MCF 10A (cell line): ENCODE measurements at regions of chr2 and their contacts with region 1.

Region 1: GRCh38 chr2:109128048-109128465 is 948 bp upstream of the SH3RF3 start:
- DNase-seq: peak; percentile 88
- H3K4me3 Mint-ChIP-seq: peak overlapping the region; percentile 92
- H3K27ac Mint-ChIP-seq: no peak overlapping the region
- H3K4me1 Mint-ChIP-seq: peaks cover 58% of the 10 kb centered on the region
- H3K27me3 Mint-ChIP-seq: no peaks in the 10 kb centered on the region
- CTCF ChIP-seq: peak; percentile 89

Region 2: DNA sequence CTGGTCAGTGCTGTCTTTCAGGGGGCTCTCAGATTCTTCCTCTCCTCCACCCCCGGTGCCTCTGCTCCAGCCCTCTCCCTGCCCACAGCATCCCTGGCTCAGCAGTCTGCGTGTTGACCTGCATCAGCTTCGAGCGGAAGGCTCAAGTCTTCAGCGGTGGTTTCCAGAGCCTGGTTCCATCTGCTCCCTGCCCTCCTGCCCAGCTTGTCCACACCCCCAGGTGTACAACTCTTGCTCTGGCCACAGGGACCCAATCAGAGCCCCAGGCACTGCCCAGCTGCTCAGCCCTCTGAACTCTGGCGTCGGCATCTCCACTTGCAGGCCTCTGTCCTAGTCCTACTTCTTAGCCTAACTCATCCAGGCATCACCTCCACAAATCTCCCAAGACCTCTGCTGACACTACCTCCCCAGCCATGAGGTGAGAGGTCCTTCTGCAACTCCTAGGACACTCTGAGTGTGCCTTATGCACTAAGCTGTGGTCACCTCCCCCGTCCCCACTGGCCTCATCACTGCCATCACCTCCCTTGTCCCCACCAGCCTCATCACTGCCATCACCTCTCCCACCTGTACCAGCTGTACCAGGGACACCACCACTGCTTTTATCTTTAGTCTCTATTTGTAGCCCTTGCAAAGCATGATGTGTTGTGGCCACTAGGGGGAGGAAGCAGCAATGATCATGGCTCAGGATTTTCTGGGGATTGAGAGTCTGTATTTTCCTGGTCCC is 200.0 kb before region 1 on chr2:
- CTCF ChIA-PET with region 1: interaction called, 3 read pairs
- POLR2A ChIA-PET with region 1: no interaction called
- intact Hi-C with region 1: loop called (anchors 5 kb)
- DNase-seq: peak; percentile 75
- H3K4me3 Mint-ChIP-seq: no peak overlapping the region
- H3K27ac Mint-ChIP-seq: no peak overlapping the region
- H3K4me1 Mint-ChIP-seq: peaks cover 7% of the 10 kb centered on the region
- H3K27me3 Mint-ChIP-seq: peaks cover 24% of the 10 kb centered on the region
- CTCF ChIP-seq: peak; percentile 72

Region 3: DNA sequence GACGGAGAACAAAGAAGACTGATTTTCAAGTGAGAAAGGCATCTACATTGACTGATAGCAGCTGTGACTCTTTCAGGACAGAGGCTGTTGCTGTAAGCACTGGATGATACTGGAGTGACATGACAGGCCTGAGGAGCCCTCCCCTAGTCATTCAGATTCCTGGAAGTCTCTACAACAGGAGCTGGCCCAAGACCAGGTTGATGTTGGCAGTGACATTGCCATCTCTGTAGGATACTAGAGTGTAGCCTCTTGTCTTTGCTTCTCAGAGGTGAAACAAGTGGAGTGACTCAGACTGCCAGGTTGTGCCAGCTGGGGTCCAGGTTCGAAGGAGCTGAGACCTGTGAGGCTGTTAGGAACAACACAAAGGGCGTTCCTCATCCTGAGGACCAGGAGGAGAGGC is 43.7 kb before region 1 on chr2:
- CTCF ChIA-PET with region 1: no interaction called
- POLR2A ChIA-PET with region 1: no interaction called
- intact Hi-C with region 1: no loop called
- DNase-seq: no peak
- H3K4me3 Mint-ChIP-seq: no peak overlapping the region
- H3K27ac Mint-ChIP-seq: no peak overlapping the region
- H3K4me1 Mint-ChIP-seq: no peaks in the 10 kb centered on the region
- H3K27me3 Mint-ChIP-seq: peaks cover 37% of the 10 kb centered on the region
- CTCF ChIP-seq: no peak

Region 4: GRCh38 chr2:109213646-109214417 is 85.8 kb after region 1 on chr2:
- CTCF ChIA-PET with region 1: interaction called, 4 read pairs
- POLR2A ChIA-PET with region 1: interaction called, 5 read pairs
- intact Hi-C with region 1: loop called (anchors 2 kb)
- DNase-seq: peak; percentile 97
- H3K4me3 Mint-ChIP-seq: peak overlapping the region; percentile 48
- H3K27ac Mint-ChIP-seq: peak overlapping the region; percentile 90
- H3K4me1 Mint-ChIP-seq: peaks cover 78% of the 10 kb centered on the region
- H3K27me3 Mint-ChIP-seq: no peaks in the 10 kb centered on the region
- CTCF ChIP-seq: no peak

Region 5: GRCh38 chr2:109260886-109261700 is 133.0 kb after region 1 on chr2:
- CTCF ChIA-PET with region 1: interaction called, 4 read pairs
- POLR2A ChIA-PET with region 1: no interaction called
- intact Hi-C with region 1: loop called (anchors 1 kb)
- DNase-seq: peak; percentile 47
- H3K4me3 Mint-ChIP-seq: no peak overlapping the region
- H3K27ac Mint-ChIP-seq: no peak overlapping the region
- H3K4me1 Mint-ChIP-seq: peaks cover 33% of the 10 kb centered on the region
- H3K27me3 Mint-ChIP-seq: no peaks in the 10 kb centered on the region
- CTCF ChIP-seq: peak; percentile 28

Region 6: DNA sequence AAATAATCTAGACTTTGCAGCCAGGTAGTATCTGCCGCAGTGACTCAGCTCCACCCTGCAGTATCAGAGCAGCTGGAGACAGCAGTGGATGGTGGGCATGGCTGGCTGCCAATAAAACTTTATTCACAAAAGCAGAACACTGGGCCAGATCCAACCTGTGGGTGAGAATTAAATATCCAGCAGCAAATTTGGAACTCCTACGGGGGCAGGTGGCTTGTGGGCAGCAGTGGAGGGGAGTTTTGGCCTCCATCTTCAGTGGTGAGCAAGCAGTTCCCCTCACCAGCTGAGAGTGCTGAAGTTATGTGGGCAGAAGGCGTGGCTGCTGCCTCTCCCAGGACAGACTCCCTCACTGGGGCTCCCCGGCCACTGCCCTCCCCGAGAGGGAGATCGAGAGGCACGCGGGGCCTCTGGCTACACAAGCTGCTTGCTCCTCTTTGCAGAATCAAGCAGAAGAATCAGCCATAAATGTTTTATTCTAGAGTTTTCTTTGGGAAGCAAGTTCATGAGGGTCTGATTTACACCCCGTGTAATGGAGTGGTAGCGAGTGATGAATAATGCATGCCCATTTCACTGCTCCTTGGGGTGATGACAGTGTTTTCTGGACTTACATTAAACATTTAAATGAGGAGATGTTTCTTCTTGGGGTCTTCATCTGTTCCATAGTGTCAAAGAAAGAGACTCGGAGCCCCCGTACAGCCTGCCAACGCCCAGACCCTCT is 281.4 kb after region 1 on chr2:
- CTCF ChIA-PET with region 1: interaction called, 5 read pairs
- POLR2A ChIA-PET with region 1: interaction called, 4 read pairs
- intact Hi-C with region 1: loop called (anchors 5 kb)
- DNase-seq: peak; percentile 25
- H3K4me3 Mint-ChIP-seq: no peak overlapping the region
- H3K27ac Mint-ChIP-seq: no peak overlapping the region
- H3K4me1 Mint-ChIP-seq: peaks cover 18% of the 10 kb centered on the region
- H3K27me3 Mint-ChIP-seq: no peaks in the 10 kb centered on the region
- CTCF ChIP-seq: no peak

Region 7: GRCh38 chr2:109510136-109511028 is 382.3 kb after region 1 on chr2:
- CTCF ChIA-PET with region 1: interaction called, 89 read pairs
- POLR2A ChIA-PET with region 1: interaction called, 5 read pairs
- intact Hi-C with region 1: loop called (anchors 1 kb)
- DNase-seq: peak; percentile 87
- H3K4me3 Mint-ChIP-seq: no peak overlapping the region
- H3K27ac Mint-ChIP-seq: no peak overlapping the region
- H3K4me1 Mint-ChIP-seq: peaks cover 17% of the 10 kb centered on the region
- H3K27me3 Mint-ChIP-seq: no peaks in the 10 kb centered on the region
- CTCF ChIP-seq: peak; percentile 89